ENCODE measurements at regions of chr17 and their contacts with region 1.

Region 1: GRCh38 chr17:76567634-76568432 is 17.8 kb downstream of the ST6GALNAC2 start:
- DNase-seq: peak in 3 of 4 experiments; percentile 18 to 31 (median 30)
- ATAC-seq: peak; percentile 28
- H3K4me3 ChIP-seq: no peak overlapping the region
- H3K27ac ChIP-seq: peak overlapping the region; percentile 3; the same call in 1 of the 3 replicates
- H3K4me1 ChIP-seq: peaks cover 16 to 37% of the 10 kb centered on the region in 2 experiments; a peak in 4 of 5 replicates
- H3K27me3 ChIP-seq: no peaks in the 10 kb centered on the region
- CTCF ChIP-seq: no peak
- EP300 ChIP-seq: no peak
- POLR2A ChIP-seq: peak; percentile 45; the same call in 1 of the 2 replicates
- RAD21 ChIP-seq: no peak

Region 2: GRCh38 chr17:76578344-76578979 is 10.6 kb after region 1 on chr17:
- CTCF ChIA-PET with region 1: no interaction called
- POLR2A ChIA-PET with region 1: interaction called, 38 read pairs
- in situ Hi-C with region 1: no loop called
- intact Hi-C with region 1: no loop called
- DNase-seq: peak in 2 of 4 experiments; percentile 39 to 59
- ATAC-seq: peak; percentile 63
- H3K4me3 ChIP-seq: no peak overlapping the region
- H3K27ac ChIP-seq: peak overlapping the region; percentile 56
- H3K4me1 ChIP-seq: peaks cover 16 to 20% of the 10 kb centered on the region in 2 experiments
- H3K27me3 ChIP-seq: no peaks in the 10 kb centered on the region
- CTCF ChIP-seq: no peak
- EP300 ChIP-seq: no peak
- POLR2A ChIP-seq: no peak
- RAD21 ChIP-seq: no peak